ENCODE measurements at regions of chr14 and their contacts with region 1.

Region 1: GRCh38 chr14:72792051-72792788 is 101.7 kb downstream of the DPF3 start:
- DNase-seq: peak; percentile 53 to 81
- ATAC-seq: peak; percentile 72 to 83 (median 81)
- H3K4me3 ChIP-seq: peak overlapping the region; percentile 24
- H3K27ac ChIP-seq: peak overlapping the region; percentile 84
- H3K4me1 ChIP-seq: peaks cover 56% of the 10 kb centered on the region
- H3K27me3 ChIP-seq: no peaks in the 10 kb centered on the region
- CTCF ChIP-seq: no peak

Region 2: DNA sequence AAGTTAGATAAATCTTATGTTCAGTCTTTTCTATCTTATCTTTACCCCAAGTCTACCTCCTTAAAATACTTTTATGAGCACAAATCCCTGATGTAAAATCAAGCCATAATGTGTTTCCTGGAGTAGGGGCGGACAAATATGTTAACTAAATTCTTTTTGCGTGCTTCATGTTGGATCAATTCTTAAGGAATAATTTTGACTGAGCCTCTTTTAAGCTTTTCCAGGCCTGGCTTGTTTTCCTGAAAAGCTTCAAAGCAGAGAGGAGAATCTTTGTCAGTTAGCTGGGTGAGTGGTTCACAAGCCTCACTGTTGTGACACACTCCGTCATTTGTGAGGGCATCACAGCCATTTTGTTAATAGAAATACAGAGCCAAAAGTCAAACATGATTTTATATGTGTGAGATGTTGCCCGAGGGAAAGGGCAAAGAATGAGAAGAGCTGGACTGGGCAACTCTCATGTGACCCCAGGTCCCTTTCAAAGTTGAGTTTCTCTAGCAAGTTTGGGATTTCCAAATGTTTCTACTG is 391.1 kb before region 1 on chr14:
- intact Hi-C with region 1: no loop called
- DNase-seq: no peak
- ATAC-seq: no peak
- H3K4me3 ChIP-seq: no peak overlapping the region
- H3K27ac ChIP-seq: no peak overlapping the region
- H3K4me1 ChIP-seq: no peaks in the 10 kb centered on the region
- H3K27me3 ChIP-seq: no peaks in the 10 kb centered on the region
- CTCF ChIP-seq: no peak

Region 3: GRCh38 chr14:72617391-72618031 is 174.7 kb before region 1 on chr14:
- intact Hi-C with region 1: no loop called
- DNase-seq: peak in 1 of 2 donors; percentile 35
- ATAC-seq: peak; percentile 67 to 81 (median 72)
- H3K4me3 ChIP-seq: peak overlapping the region; percentile 34
- H3K27ac ChIP-seq: peak overlapping the region; percentile 88
- H3K4me1 ChIP-seq: peaks cover 56% of the 10 kb centered on the region
- H3K27me3 ChIP-seq: no peaks in the 10 kb centered on the region
- CTCF ChIP-seq: no peak

Region 4: DNA sequence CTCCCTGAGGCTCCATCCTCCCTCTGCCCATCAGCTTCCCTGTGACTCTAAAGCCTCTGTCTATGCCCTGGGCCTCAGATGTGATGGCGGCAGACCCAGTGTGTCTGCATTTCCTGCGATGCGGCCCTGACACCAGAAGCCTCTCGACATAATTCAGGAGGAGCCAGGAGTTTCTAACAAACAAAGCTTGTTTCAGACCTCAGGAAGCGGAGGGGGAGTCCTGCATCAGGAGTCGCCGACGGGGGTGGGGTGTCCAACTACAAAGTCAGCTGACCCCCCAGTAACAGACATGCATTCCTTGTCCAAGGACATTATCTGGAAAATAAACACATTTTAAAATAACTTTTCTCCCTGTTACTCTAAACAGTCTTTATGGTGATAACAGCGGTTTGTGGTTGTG is 65.8 kb before region 1 on chr14:
- intact Hi-C with region 1: no loop called
- DNase-seq: no peak
- ATAC-seq: no peak
- H3K4me3 ChIP-seq: no peak overlapping the region
- H3K27ac ChIP-seq: no peak overlapping the region
- H3K4me1 ChIP-seq: peaks cover 19% of the 10 kb centered on the region
- H3K27me3 ChIP-seq: no peaks in the 10 kb centered on the region
- CTCF ChIP-seq: no peak

Region 5: GRCh38 chr14:72745991-72746980 is 45.9 kb before region 1 on chr14:
- intact Hi-C with region 1: loop called (anchors 5 kb)
- DNase-seq: peak; percentile 50 to 73
- ATAC-seq: peak; percentile 64 to 89 (median 85)
- H3K4me3 ChIP-seq: no peak overlapping the region
- H3K27ac ChIP-seq: peak overlapping the region; percentile 27
- H3K4me1 ChIP-seq: peaks cover 27% of the 10 kb centered on the region
- H3K27me3 ChIP-seq: no peaks in the 10 kb centered on the region
- CTCF ChIP-seq: no peak

Region 6: GRCh38 chr14:72752034-72752412 is 40.2 kb before region 1 on chr14:
- intact Hi-C with region 1: loop called (anchors 5 kb)
- DNase-seq: no peak
- ATAC-seq: peak; percentile 40 to 92 (median 80)
- H3K4me3 ChIP-seq: no peak overlapping the region
- H3K27ac ChIP-seq: no peak overlapping the region
- H3K4me1 ChIP-seq: peaks cover 11% of the 10 kb centered on the region
- H3K27me3 ChIP-seq: no peaks in the 10 kb centered on the region
- CTCF ChIP-seq: no peak

Region 7: GRCh38 chr14:72775923-72776554 is 16.2 kb before region 1 on chr14:
- intact Hi-C with region 1: no loop called
- DNase-seq: no peak
- ATAC-seq: peak; percentile 68 to 81 (median 78)
- H3K4me3 ChIP-seq: no peak overlapping the region
- H3K27ac ChIP-seq: no peak overlapping the region
- H3K4me1 ChIP-seq: peaks cover 54% of the 10 kb centered on the region
- H3K27me3 ChIP-seq: no peaks in the 10 kb centered on the region
- CTCF ChIP-seq: no peak

Measured in psoas muscle (tissue), 8 donors.